CD4-positive, alpha-beta T cell (primary cell): ENCODE measurements at regions of chr15 and their contacts with region 1.

Region 1: GRCh38 chr15:90931737-90932659 is at the start of gene HDDC3:
- DNase-seq: peak; percentile 82 to 94 (median 88)
- ATAC-seq: peak; percentile 63
- H3K4me3 ChIP-seq: peak within 1 kb of the TSS; percentile 95
- H3K4me3 Mint-ChIP-seq: peak within 1 kb of the TSS; percentile 98
- H3K27ac ChIP-seq: peak within 1 kb of the TSS; percentile 81 to 92
- H3K27ac Mint-ChIP-seq: peak within 1 kb of the TSS; percentile 96
- H3K4me1 ChIP-seq: peaks cover 76% of the 10 kb centered on the region
- H3K4me1 Mint-ChIP-seq: peaks cover 49% of the 10 kb centered on the region
- H3K27me3 ChIP-seq: no peaks in the 10 kb centered on the region
- H3K27me3 Mint-ChIP-seq: no peaks in the 10 kb centered on the region
- CTCF ChIP-seq: peak; percentile 94
- total RNA-seq, gene HDDC3: 9.9 to 10.8 TPM

Region 2: GRCh38 chr15:89893696-89894455 is 1038.1 kb before region 1 on chr15 and contains the start of gene AP3S2:
- CTCF ChIA-PET with region 1: no interaction called
- POLR2A ChIA-PET with region 1: interaction called, 3 read pairs
- intact Hi-C with region 1: loop called (anchors 10 kb)
- DNase-seq: peak; percentile 81 to 94 (median 85)
- ATAC-seq: peak; percentile 90
- H3K4me3 ChIP-seq: peak within 1 kb of the TSS; percentile 86
- H3K4me3 Mint-ChIP-seq: peak within 1 kb of the TSS; percentile 96
- H3K27ac ChIP-seq: peak within 1 kb of the TSS; percentile 60 to 74
- H3K27ac Mint-ChIP-seq: peak within 1 kb of the TSS; percentile 95
- H3K4me1 ChIP-seq: peaks cover 29% of the 10 kb centered on the region
- H3K4me1 Mint-ChIP-seq: peaks cover 42% of the 10 kb centered on the region
- H3K27me3 ChIP-seq: no peaks in the 10 kb centered on the region
- H3K27me3 Mint-ChIP-seq: no peaks in the 10 kb centered on the region
- CTCF ChIP-seq: no peak
- total RNA-seq, gene AP3S2: 18.9 to 20.5 TPM

Region 3: GRCh38 chr15:89993349-89993748 is 938.6 kb before region 1 on chr15:
- CTCF ChIA-PET with region 1: no interaction called
- POLR2A ChIA-PET with region 1: no interaction called
- intact Hi-C with region 1: no loop called
- DNase-seq: no peak
- ATAC-seq: no peak
- H3K4me3 ChIP-seq: no peak overlapping the region
- H3K4me3 Mint-ChIP-seq: no peak overlapping the region
- H3K27ac ChIP-seq: no peak overlapping the region
- H3K27ac Mint-ChIP-seq: no peak overlapping the region
- H3K4me1 ChIP-seq: peaks cover 2% of the 10 kb centered on the region
- H3K4me1 Mint-ChIP-seq: no peaks in the 10 kb centered on the region
- H3K27me3 ChIP-seq: no peaks in the 10 kb centered on the region
- H3K27me3 Mint-ChIP-seq: no peaks in the 10 kb centered on the region
- CTCF ChIP-seq: no peak

Region 4: DNA sequence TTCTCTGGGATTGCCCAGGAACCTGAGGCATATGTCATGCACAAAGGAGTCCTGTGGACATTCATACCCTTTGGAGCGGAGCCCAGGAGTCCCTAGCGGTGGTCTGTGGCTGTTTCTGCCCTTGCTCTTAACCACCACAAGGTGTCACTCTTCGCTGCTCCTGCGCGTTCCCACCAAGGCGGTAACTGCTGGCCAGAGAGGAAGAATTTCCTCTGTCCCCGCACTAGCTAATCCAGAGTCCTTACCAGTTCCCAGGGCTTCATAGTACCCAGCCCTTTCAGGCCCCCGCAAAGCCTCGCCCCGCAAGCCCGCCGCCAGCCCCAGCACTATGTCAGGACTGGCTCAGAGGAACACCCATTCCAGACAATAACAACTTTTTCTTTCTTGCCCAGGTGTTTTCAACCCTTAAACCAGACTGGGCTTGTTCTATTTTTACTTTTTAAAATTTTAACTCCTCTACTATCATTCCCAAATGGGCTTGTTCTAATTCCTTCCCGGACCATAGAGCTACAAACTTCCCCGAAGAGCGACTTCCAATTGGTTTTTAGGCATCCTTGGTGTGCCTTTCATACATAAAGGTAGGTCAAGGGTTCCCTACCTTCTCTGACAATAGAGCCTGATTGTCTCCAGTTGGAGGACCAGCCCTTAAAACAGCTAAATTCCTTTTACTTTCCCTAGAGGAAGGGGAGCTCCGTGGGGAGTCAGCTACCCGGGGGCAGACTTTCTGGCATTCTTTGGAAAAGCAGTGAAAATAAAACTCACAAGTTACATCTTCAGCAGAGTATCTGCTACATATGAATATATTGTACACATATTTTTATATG is 611.7 kb before region 1 on chr15:
- CTCF ChIA-PET with region 1: no interaction called
- POLR2A ChIA-PET with region 1: no interaction called
- intact Hi-C with region 1: loop called in 1 of 2 experiments (anchors 5 kb)
- DNase-seq: peak; percentile 43 to 87 (median 56)
- ATAC-seq: peak; percentile 96
- H3K4me3 ChIP-seq: no peak overlapping the region
- H3K4me3 Mint-ChIP-seq: no peak overlapping the region
- H3K27ac ChIP-seq: no peak overlapping the region
- H3K27ac Mint-ChIP-seq: no peak overlapping the region
- H3K4me1 ChIP-seq: peaks cover 7% of the 10 kb centered on the region
- H3K4me1 Mint-ChIP-seq: peaks cover 9% of the 10 kb centered on the region
- H3K27me3 ChIP-seq: no peaks in the 10 kb centered on the region
- H3K27me3 Mint-ChIP-seq: no peaks in the 10 kb centered on the region
- CTCF ChIP-seq: peak; percentile 96

Region 5: GRCh38 chr15:90716976-90717821 is 214.8 kb before region 1 on chr15 and contains the start of gene BLM:
- CTCF ChIA-PET with region 1: interaction called, 8 read pairs
- POLR2A ChIA-PET with region 1: interaction called, 9 read pairs
- intact Hi-C with region 1: loop called in 1 of 2 experiments (anchors 5 kb)
- DNase-seq: peak; percentile 88 to 99 (median 93)
- ATAC-seq: peak; percentile 99
- H3K4me3 ChIP-seq: peak within 1 kb of the TSS; percentile 78
- H3K4me3 Mint-ChIP-seq: peak within 1 kb of the TSS; percentile 99
- H3K27ac ChIP-seq: peak within 1 kb of the TSS; percentile 82 to 92
- H3K27ac Mint-ChIP-seq: peak within 1 kb of the TSS; percentile 96
- H3K4me1 ChIP-seq: peaks cover 13% of the 10 kb centered on the region
- H3K4me1 Mint-ChIP-seq: peaks cover 29% of the 10 kb centered on the region
- H3K27me3 ChIP-seq: no peaks in the 10 kb centered on the region
- H3K27me3 Mint-ChIP-seq: no peaks in the 10 kb centered on the region
- CTCF ChIP-seq: peak; percentile 27
- total RNA-seq, gene BLM: 1.6 to 1.8 TPM

Region 6: GRCh38 chr15:90902040-90902839 is 29.8 kb before region 1 on chr15:
- CTCF ChIA-PET with region 1: interaction called, 88 read pairs
- POLR2A ChIA-PET with region 1: interaction called, 232 read pairs
- intact Hi-C with region 1: loop called (anchors 1 kb)
- DNase-seq: peak; percentile 52 to 88 (median 62)
- ATAC-seq: peak; percentile 67
- H3K4me3 ChIP-seq: peak overlapping the region; percentile 69
- H3K4me3 Mint-ChIP-seq: peak overlapping the region; percentile 87
- H3K27ac ChIP-seq: peak overlapping the region; percentile 15 to 65
- H3K27ac Mint-ChIP-seq: peak overlapping the region; percentile 76
- H3K4me1 ChIP-seq: peaks cover 19% of the 10 kb centered on the region
- H3K4me1 Mint-ChIP-seq: peaks cover 34% of the 10 kb centered on the region
- H3K27me3 ChIP-seq: no peaks in the 10 kb centered on the region
- H3K27me3 Mint-ChIP-seq: no peaks in the 10 kb centered on the region
- CTCF ChIP-seq: peak; percentile 91

Region 7: GRCh38 chr15:90946538-90946937 is 14.5 kb after region 1 on chr15:
- CTCF ChIA-PET with region 1: interaction called, 13 read pairs
- POLR2A ChIA-PET with region 1: interaction called, 15 read pairs
- intact Hi-C with region 1: no loop called
- DNase-seq: peak in 1 of 14 experiments; percentile 9
- ATAC-seq: no peak
- H3K4me3 ChIP-seq: no peak overlapping the region
- H3K4me3 Mint-ChIP-seq: no peak overlapping the region
- H3K27ac ChIP-seq: no peak overlapping the region
- H3K27ac Mint-ChIP-seq: no peak overlapping the region
- H3K4me1 ChIP-seq: no peaks in the 10 kb centered on the region
- H3K4me1 Mint-ChIP-seq: no peaks in the 10 kb centered on the region
- H3K27me3 ChIP-seq: no peaks in the 10 kb centered on the region
- H3K27me3 Mint-ChIP-seq: no peaks in the 10 kb centered on the region
- CTCF ChIP-seq: no peak

Region 8: DNA sequence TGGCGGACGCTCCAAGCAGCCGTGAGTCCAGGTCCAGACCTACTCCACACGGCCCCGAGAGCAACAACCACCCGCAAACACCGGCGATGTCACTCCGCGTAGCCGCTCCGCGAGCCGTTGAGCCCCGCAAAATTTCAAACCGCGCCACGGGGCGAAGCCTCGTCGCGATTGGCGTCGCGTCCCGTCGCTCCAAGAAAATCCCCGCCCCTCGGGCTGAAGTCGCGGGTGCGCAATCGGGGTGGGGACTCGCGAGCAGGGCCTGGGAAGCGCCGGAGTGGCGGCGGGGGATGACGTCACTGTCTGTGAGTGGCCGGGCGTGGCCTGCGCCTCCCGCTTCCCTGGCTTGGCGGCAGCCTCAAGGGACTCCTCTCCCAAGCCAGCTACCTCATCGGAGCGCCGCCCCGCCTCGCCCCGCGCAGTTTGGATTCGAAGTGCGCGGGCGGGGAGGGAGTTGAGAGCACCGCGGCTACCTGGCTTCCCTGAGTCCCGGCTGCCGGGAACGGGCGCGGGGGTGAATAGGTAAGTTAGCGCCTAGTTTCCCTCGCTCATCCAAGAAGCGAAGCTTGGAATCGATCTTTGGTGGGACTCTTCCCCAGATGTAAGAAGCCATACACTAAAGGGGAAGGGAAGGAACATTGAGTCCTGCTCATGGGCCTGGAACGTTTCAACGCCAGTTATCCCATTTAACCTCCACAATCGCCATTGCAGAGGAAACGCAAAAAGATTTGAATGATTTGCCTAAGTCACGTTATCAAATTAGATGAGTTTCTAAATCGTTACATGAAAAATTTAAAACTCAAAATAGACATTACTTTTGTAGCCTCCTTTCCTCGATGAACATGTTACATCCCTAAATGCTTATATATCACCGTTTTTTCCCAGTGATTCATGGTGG is 62.7 kb after region 1 on chr15 and contains the start of gene PRC1:
- CTCF ChIA-PET with region 1: interaction called, 5 read pairs
- POLR2A ChIA-PET with region 1: interaction called, 6 read pairs
- intact Hi-C with region 1: loop called (anchors 5 to 10 kb)
- DNase-seq: peak; percentile 93 to 99 (median 96)
- ATAC-seq: peak; percentile 95
- H3K4me3 ChIP-seq: peak within 1 kb of the TSS; percentile 100
- H3K4me3 Mint-ChIP-seq: peak within 1 kb of the TSS; percentile 100
- H3K27ac ChIP-seq: peak within 1 kb of the TSS; percentile 89 to 91
- H3K27ac Mint-ChIP-seq: peak within 1 kb of the TSS; percentile 99
- H3K4me1 ChIP-seq: peaks cover 13% of the 10 kb centered on the region
- H3K4me1 Mint-ChIP-seq: peaks cover 21% of the 10 kb centered on the region
- H3K27me3 ChIP-seq: no peaks in the 10 kb centered on the region
- H3K27me3 Mint-ChIP-seq: no peaks in the 10 kb centered on the region
- CTCF ChIP-seq: no peak
- total RNA-seq, gene PRC1: 24.4 to 26.7 TPM